Activated T-helper 1 cell treated with anti-CD3 and anti-CD28 coated beads, Interleukin-12 subunit alpha, Interleukin-12 subunit beta, Interleukin-2, Interleukin-4 antibody, amounts not matched to agents 30 ng/mL and 10 ng/mL and 1 ng/mL, durations not matched to agents 14 hours and 24 hours and 36 hours (primary cell): ENCODE measurements at regions of chr12 and their contacts with region 1.

Region 1: DNA sequence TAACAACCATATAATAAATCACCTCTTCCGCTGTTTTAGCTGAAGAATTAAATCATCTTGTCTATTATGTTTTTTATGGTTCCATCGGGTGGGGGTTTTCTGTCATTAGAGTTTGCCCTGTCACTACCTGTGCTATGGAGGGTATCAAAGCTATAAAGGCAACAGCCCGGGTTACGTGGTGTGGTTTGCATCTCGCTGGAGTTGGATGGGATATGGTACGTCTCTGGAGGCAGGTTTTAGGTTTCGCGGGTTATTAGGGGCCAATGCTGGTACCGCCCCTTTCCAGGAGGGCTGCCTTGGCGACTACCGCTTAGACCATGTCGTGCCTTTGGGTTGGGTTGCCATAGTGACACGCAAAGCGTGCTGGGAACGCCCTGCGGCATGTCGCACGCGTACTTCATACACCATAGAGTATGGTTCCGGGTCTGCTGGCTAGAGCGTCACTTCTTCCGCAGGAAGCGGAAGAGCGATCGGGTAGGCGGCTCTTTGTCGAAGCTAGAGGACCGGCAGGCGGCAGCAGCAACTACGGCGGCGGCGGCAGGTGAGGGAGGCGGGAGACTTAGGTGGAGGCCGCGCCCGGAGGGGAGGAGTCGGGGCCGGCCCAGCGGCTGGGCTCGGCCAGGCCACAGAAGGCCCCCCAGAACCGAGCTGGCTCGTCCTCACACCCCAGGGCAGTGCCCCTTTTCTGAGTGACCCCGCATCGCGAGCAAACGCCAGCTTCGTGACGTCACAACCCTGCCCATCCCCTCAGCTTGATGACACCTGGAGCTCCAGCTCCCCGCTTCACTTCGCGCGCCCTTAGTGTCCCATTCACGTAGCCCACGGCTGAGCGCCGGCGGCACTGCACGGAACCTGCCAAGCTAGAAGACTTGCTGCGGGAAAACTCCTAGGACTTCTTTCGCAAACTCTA is at the start of gene ZC3H10:
- DNase-seq: peak; percentile 98
- H3K4me3 Mint-ChIP-seq: peak within 1 kb of the TSS; percentile 91
- H3K27ac Mint-ChIP-seq: peak within 1 kb of the TSS; percentile 99
- H3K4me1 Mint-ChIP-seq: peaks cover 31% of the 10 kb centered on the region
- H3K27me3 Mint-ChIP-seq: no peaks in the 10 kb centered on the region
- total RNA-seq, gene ZC3H10: 13.5 and 13.7 TPM in 2 replicates

Region 2: GRCh38 chr12:55817346-55818139 is 300.5 kb before region 1 on chr12 and contains the starts of genes ORMDL2 and SARNP:
- intact Hi-C with region 1: loop called (anchors 5 kb)
- DNase-seq: peak; percentile 97
- H3K4me3 Mint-ChIP-seq: no peak within 1 kb of the TSS
- H3K27ac Mint-ChIP-seq: no peak within 1 kb of the TSS
- H3K4me1 Mint-ChIP-seq: peaks cover 33% of the 10 kb centered on the region
- H3K27me3 Mint-ChIP-seq: no peaks in the 10 kb centered on the region
- total RNA-seq, gene ORMDL2: 58.9 and 61.2 TPM in 2 replicates
- total RNA-seq, gene SARNP: 70.7 and 75.1 TPM in 2 replicates

Region 3: GRCh38 chr12:56078990-56079664 is 38.9 kb before region 1 on chr12:
- intact Hi-C with region 1: no loop called
- DNase-seq: peak; percentile 25
- H3K4me3 Mint-ChIP-seq: peak overlapping the region; percentile 80
- H3K27ac Mint-ChIP-seq: no peak overlapping the region
- H3K4me1 Mint-ChIP-seq: peaks cover 13% of the 10 kb centered on the region
- H3K27me3 Mint-ChIP-seq: peaks cover 25% of the 10 kb centered on the region

Region 4: GRCh38 chr12:56104109-56104814 is 13.8 kb before region 1 on chr12 and contains the start of gene PA2G4:
- intact Hi-C with region 1: loop called (anchors 1 kb)
- DNase-seq: peak; percentile 99
- H3K4me3 Mint-ChIP-seq: peak within 1 kb of the TSS; percentile 98
- H3K27ac Mint-ChIP-seq: peak within 1 kb of the TSS; percentile 89
- H3K4me1 Mint-ChIP-seq: peaks cover 49% of the 10 kb centered on the region
- H3K27me3 Mint-ChIP-seq: no peaks in the 10 kb centered on the region
- total RNA-seq, gene PA2G4: 404 and 419 TPM in 2 replicates

Region 5: DNA sequence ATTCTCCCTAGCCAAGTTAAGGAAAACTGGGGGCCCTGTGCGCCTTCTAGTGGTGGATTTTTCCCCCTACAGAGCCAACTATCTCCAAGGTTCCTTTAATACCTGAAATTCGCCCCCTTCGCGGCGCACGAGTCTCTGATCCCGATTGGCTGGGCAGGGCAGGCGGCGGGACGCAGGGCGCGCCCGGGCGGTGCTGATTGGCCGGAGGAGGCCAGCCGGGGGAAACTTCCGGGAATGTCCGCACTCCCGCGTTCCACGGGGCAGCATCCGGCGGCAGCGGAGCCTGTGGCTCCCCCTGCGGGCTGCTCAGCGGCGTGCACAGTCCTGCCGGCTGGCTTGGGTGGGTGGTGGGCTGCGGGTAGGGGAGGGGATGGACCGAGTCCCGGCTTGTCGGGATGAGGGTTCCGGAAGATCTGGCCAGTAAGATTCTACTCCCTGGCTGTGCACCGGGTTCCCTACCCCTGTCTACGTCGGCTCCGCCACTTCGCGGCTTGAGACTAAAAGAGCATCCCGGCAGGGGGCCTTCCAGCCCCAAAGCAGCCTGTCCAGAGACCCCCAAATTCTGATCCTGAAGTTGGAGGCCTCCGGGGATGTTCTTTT is 106.2 kb after region 1 on chr12 and contains the start of gene NABP2:
- intact Hi-C with region 1: loop called (anchors 1 kb)
- DNase-seq: peak; percentile 94
- H3K4me3 Mint-ChIP-seq: peak within 1 kb of the TSS; percentile 99
- H3K27ac Mint-ChIP-seq: peak within 1 kb of the TSS; percentile 81
- H3K4me1 Mint-ChIP-seq: peaks cover 51% of the 10 kb centered on the region
- H3K27me3 Mint-ChIP-seq: no peaks in the 10 kb centered on the region
- total RNA-seq, gene NABP2: 97.5 and 102 TPM in 2 replicates

Region 6: GRCh38 chr12:56333679-56334489 is 215.9 kb after region 1 on chr12 and contains the start of gene PAN2:
- intact Hi-C with region 1: loop called (anchors 1 kb)
- DNase-seq: peak; percentile 94
- H3K4me3 Mint-ChIP-seq: peak within 1 kb of the TSS; percentile 87
- H3K27ac Mint-ChIP-seq: peak within 1 kb of the TSS; percentile 100
- H3K4me1 Mint-ChIP-seq: peaks cover 42% of the 10 kb centered on the region
- H3K27me3 Mint-ChIP-seq: no peaks in the 10 kb centered on the region
- total RNA-seq, gene PAN2: 20.9 and 21.3 TPM in 2 replicates

Region 7: GRCh38 chr12:56688129-56688845 is 570.3 kb after region 1 on chr12 and contains the start of gene PTGES3:
- intact Hi-C with region 1: loop called (anchors 5 kb)
- DNase-seq: peak; percentile 98
- H3K4me3 Mint-ChIP-seq: peak within 1 kb of the TSS; percentile 100
- H3K27ac Mint-ChIP-seq: peak within 1 kb of the TSS; percentile 100
- H3K4me1 Mint-ChIP-seq: peaks cover 23% of the 10 kb centered on the region
- H3K27me3 Mint-ChIP-seq: no peaks in the 10 kb centered on the region
- total RNA-seq, gene PTGES3: 301 and 302 TPM in 2 replicates